Activated CD4-positive, alpha-beta T cell treated with anti-CD3 and anti-CD28 coated beads for 36 hours (primary cell): ENCODE measurements at regions of chr6 and their contacts with region 1.

Region 1: GRCh38 chr6:160930547-160931377 is 60.8 kb upstream of the MAP3K4 start:
- DNase-seq: peak; percentile 77
- ATAC-seq: peak; percentile 81
- H3K4me3 Mint-ChIP-seq: peak overlapping the region; percentile 34
- H3K27ac Mint-ChIP-seq: no peak overlapping the region
- H3K4me1 Mint-ChIP-seq: peaks cover 2% of the 10 kb centered on the region
- H3K27me3 Mint-ChIP-seq: peaks cover 37% of the 10 kb centered on the region

Region 2: DNA sequence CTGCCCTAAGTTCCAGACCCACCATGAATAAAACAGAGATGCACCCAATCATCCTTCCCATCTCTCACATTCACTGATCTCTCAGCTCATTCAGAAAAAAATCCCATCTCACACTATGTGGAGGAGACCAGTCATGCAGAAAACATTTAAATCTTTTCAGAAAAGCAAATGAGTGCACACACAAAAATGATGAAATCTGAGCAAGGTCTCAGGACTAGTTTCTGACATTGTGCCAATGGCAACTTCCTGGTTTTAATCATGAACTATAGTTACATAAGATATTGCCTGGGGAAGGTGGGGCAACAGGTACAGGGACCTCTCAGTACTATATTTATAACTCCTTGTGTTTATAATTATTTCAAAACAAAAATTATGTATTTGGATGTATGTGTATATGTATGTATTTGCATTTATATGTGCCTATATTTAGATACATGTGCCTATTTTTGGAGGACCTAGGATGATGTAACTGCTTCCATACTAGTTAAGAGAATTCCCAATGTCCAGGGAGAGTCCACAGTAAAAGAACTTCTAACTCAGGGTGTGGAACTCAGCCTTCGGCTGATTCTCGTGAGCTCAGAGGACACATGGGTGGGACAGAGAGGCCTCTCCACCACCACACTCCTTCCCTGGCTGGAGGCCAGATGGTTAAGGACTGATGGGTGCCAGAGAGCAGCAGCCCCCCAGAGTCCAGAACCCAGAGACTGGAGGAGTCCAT is 10.9 kb before region 1 on chr6:
- CTCF ChIA-PET with region 1: interaction called, 10 read pairs
- POLR2A ChIA-PET with region 1: no interaction called
- intact Hi-C with region 1: no loop called
- DNase-seq: no peak
- ATAC-seq: no peak
- H3K4me3 Mint-ChIP-seq: no peak overlapping the region
- H3K27ac Mint-ChIP-seq: no peak overlapping the region
- H3K4me1 Mint-ChIP-seq: no peaks in the 10 kb centered on the region
- H3K27me3 Mint-ChIP-seq: peaks cover 11% of the 10 kb centered on the region

Region 3: DNA sequence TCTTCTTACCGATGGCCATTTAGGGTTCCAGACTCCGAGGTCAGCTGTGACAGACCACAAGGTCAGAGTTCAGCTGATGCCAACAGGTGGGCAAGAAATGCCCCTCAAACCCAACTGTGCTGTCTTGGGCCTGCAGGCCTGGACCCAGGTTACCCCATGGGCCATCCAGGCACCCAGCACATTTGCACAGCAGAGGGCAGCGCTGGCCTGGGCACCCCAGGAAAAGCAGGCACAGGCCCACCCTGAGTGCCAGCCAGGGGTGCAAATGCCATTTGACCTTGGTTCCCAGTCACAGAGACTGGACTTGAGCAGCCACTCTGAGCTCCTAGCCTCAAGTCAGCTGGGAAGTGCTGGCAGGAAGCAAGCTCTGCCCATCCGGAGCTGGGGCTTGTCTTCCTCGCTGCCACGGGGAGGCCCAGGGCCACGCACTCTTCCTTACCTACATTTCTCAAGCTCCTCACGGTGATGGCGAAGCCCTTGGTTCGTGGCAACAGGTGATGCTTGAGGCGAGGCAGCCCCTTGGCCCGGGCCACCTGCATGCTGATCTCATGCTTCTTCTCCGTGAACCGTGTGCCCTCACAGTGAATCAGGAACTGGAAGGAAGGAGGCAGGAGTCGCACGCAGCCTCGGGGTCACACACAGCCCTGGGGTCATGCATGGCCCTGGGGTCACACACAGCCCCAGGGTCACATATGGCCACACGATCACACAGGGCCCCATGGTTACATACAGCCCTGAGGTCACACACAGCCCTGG is 222.3 kb after region 1 on chr6:
- CTCF ChIA-PET with region 1: no interaction called
- POLR2A ChIA-PET with region 1: no interaction called
- intact Hi-C with region 1: loop called in 1 of 2 experiments (anchors 2 kb)
- DNase-seq: peak; percentile 31
- ATAC-seq: no peak
- H3K4me3 Mint-ChIP-seq: no peak overlapping the region
- H3K27ac Mint-ChIP-seq: no peak overlapping the region
- H3K4me1 Mint-ChIP-seq: no peaks in the 10 kb centered on the region
- H3K27me3 Mint-ChIP-seq: no peaks in the 10 kb centered on the region